Left ventricle myocardium inferior (tissue), 1 donor: ENCODE measurements at regions of chr17 and their contacts with region 1.

Region 1: DNA sequence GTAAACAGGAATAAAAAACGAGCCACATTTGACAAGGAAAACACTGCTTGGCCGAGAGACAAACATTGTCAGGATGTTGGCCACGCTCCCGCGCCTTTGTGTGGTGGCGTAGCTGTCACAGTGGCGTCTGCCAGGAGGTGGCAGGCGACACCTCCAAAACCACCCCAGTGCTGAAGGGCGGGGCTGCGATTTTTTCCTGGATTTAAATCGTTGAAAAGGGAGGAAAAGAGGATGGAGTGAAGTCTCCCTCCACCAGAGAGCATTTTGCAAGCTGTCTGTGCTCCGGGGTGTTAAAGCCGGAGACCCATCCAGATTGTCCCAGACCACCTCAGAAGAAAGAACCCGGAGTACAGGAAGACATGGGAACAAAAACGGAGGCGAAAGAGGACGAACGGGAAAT is 12.7 kb downstream of the MRM3 start:
- DNase-seq: peak; percentile 87
- H3K4me3 ChIP-seq: peak overlapping the region; percentile 59
- H3K27ac ChIP-seq: peak overlapping the region; percentile 61
- H3K4me1 ChIP-seq: peaks cover 16% of the 10 kb centered on the region
- H3K27me3 ChIP-seq: no peaks in the 10 kb centered on the region
- CTCF ChIP-seq: peak; percentile 94

Region 2: GRCh38 chr17:879549-880442 is 84.9 kb after region 1 on chr17:
- intact Hi-C with region 1: loop called (anchors 10 kb)
- DNase-seq: peak; percentile 83
- H3K4me3 ChIP-seq: peak overlapping the region; percentile 3
- H3K27ac ChIP-seq: peak overlapping the region; percentile 92
- H3K4me1 ChIP-seq: peaks cover 62% of the 10 kb centered on the region
- H3K27me3 ChIP-seq: no peaks in the 10 kb centered on the region
- CTCF ChIP-seq: peak; percentile 73

Region 3: GRCh38 chr17:921161-921560 is 126.3 kb after region 1 on chr17:
- intact Hi-C with region 1: no loop called
- DNase-seq: no peak
- H3K4me3 ChIP-seq: no peak overlapping the region
- H3K27ac ChIP-seq: no peak overlapping the region
- H3K4me1 ChIP-seq: peaks cover 12% of the 10 kb centered on the region
- H3K27me3 ChIP-seq: no peaks in the 10 kb centered on the region
- CTCF ChIP-seq: no peak

Region 4: GRCh38 chr17:979538-980405 is 184.9 kb after region 1 on chr17 and contains the start of gene NXN:
- intact Hi-C with region 1: loop called (anchors 5 kb)
- DNase-seq: peak; percentile 89
- H3K4me3 ChIP-seq: peak within 1 kb of the TSS; percentile 91
- H3K27ac ChIP-seq: peak within 1 kb of the TSS; percentile 88
- H3K4me1 ChIP-seq: peaks cover 52% of the 10 kb centered on the region
- H3K27me3 ChIP-seq: no peaks in the 10 kb centered on the region
- CTCF ChIP-seq: peak; percentile 41
- total RNA-seq, gene NXN: 13.8 TPM